Colonic mucosa (tissue), 4 donors: ENCODE measurements at regions of chr2 and their contacts with region 1.

Region 1: DNA sequence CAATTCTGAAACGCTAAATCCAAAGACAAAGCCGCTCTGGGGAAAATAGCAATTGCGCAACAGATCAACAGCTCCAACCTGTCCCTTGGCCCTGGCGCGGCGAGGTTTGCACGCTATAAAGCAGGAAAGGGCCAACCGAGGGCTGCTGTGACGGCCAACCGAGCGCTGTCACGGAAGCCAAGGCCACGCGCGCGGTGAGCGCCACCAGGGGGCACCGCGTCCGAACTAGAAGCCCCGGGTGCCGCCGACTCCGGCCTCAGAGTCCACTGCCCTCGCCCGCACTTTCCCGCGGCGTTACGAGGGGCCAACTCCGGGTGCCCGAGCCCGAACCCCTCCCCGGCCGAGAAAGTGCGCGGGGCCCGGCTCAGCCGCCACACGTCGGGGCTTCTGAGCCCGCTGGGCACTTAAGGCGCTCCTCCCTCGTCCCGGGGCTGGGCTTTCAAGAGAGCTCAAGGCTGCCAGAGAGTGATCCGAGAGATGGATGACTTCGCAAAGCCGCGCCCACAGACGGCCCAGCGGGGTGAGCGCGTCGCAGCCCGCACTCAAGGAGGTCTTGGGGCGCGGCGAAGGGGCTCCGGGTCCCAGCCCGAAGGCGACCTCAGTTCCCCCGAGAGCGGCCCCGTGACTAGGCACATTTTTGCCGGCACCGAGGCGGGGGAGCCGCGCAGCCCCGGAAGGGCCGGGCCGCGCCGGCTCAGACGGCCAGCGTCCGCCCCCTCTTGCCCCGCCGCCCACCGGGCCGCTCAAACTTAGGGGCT is 897 bp downstream of the NFE2L2 start:
- DNase-seq: peak; percentile 100
- H3K4me3 ChIP-seq: peak overlapping the region; percentile 94
- H3K27ac ChIP-seq: peak overlapping the region; percentile 100
- H3K4me1 ChIP-seq: no peaks in the 10 kb centered on the region
- H3K27me3 ChIP-seq: no peaks in the 10 kb centered on the region
- CTCF ChIP-seq: peak; percentile 79

Region 2: DNA sequence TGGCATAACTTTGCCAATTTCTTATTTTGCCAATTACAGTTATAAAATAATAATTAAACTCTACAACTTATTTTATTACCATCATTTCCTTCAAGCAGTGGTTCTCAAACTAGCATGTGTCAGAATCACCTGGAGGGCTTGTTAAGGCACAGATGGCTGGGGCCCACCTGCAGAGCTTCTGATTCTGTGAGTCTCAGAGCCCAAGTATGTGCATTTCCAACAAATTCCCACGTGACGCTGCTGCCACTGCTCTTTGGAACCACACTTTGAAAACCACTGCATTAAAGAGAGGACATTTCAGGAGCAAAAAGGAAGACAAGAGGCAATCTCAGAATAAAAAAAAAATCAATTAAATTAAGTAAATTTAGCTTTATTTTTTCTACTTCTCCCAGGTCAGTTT is 145.0 kb before region 1 on chr2:
- intact Hi-C with region 1: no loop called
- DNase-seq: no peak
- H3K4me3 ChIP-seq: no peak overlapping the region
- H3K27ac ChIP-seq: no peak overlapping the region
- H3K4me1 ChIP-seq: no peaks in the 10 kb centered on the region
- H3K27me3 ChIP-seq: no peaks in the 10 kb centered on the region
- CTCF ChIP-seq: no peak

Region 3: GRCh38 chr2:177212106-177212890 is 51.3 kb before region 1 on chr2 and contains the start of gene HNRNPA3:
- intact Hi-C with region 1: loop called (anchors 2 kb)
- DNase-seq: peak; percentile 100
- H3K4me3 ChIP-seq: peak within 1 kb of the TSS; percentile 81
- H3K27ac ChIP-seq: peak within 1 kb of the TSS; percentile 100
- H3K4me1 ChIP-seq: no peaks in the 10 kb centered on the region
- H3K27me3 ChIP-seq: no peaks in the 10 kb centered on the region
- CTCF ChIP-seq: no peak
- total RNA-seq, gene HNRNPA3: 147 to 278 TPM